Vagina (tissue), 2 donors: ENCODE measurements at regions of chr7 and their contacts with region 1.

Region 1: DNA sequence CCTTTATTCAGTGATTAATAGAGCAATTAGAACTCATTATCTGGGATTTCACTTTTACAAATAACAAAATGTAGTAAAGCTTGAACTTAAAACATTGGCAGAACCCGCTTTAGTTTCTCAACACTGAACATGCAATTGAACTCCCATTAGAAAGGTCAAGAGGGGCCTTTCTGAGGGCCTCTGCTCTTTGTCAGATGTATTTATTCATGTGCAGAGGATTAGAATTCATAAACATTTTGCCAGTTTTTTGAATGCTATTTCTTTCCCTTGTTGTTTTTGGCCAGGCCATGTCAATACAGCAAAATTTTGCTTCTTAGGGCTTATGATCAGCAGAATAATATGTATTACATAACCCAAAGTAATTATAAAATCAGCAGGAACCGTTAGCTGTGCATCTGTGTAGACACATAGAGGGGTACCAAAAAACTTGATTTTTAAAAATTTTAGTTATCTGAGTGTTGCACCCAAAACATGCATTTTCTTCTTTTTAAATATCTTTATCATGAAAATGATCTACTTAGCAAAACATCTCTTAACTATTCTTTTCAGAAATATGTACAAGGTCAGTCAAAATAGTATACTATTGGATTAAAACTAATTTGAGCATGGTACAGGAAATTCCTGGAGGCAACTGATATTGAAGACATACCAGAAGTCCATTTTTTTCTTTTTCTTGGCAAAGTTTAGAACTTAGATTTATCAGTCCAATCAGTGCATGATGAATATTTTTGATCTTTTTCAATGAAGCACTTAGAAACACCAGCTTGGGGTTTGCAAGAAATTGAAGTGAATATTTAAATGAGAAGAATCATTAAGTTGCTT is 177.5 kb downstream of the TWIST1 start:
- DNase-seq: no peak
- H3K4me3 ChIP-seq: no peak overlapping the region
- H3K27ac ChIP-seq: no peak overlapping the region
- H3K4me1 ChIP-seq: no peaks in the 10 kb centered on the region
- H3K27me3 ChIP-seq: no peaks in the 10 kb centered on the region
- CTCF ChIP-seq: no peak
- POLR2A ChIP-seq: no peak

Region 2: GRCh38 chr7:17713584-17713983 is 1226.4 kb before region 1 on chr7:
- intact Hi-C with region 1: loop called (anchors 10 kb)
- DNase-seq: no peak
- H3K4me3 ChIP-seq: no peak overlapping the region
- H3K27ac ChIP-seq: no peak overlapping the region
- H3K4me1 ChIP-seq: no peaks in the 10 kb centered on the region
- H3K27me3 ChIP-seq: no peaks in the 10 kb centered on the region
- CTCF ChIP-seq: no peak
- POLR2A ChIP-seq: no peak

Region 3: GRCh38 chr7:18866359-18867036 is 73.5 kb before region 1 on chr7:
- intact Hi-C with region 1: no loop called
- DNase-seq: peak in 1 of 2 donors; percentile 94
- H3K4me3 ChIP-seq: no peak overlapping the region
- H3K27ac ChIP-seq: peak overlapping the region; percentile 67
- H3K4me1 ChIP-seq: peaks cover 16% of the 10 kb centered on the region
- H3K27me3 ChIP-seq: no peaks in the 10 kb centered on the region
- CTCF ChIP-seq: no peak
- POLR2A ChIP-seq: no peak